AG04449 (cell line): ENCODE measurements at regions of chr1 and their contacts with region 1.

Region 1: GRCh38 chr1:153967082-153968000 is at the start of gene CREB3L4:
- DNase-seq: peak; percentile 90
- H3K4me3 ChIP-seq: peak within 1 kb of the TSS; percentile 73
- CTCF ChIP-seq: peak; percentile 59

Region 2: GRCh38 chr1:153728305-153729066 is 238.9 kb before region 1 on chr1:
- CTCF ChIA-PET with region 1: no interaction called
- POLR2A ChIA-PET with region 1: no interaction called
- DNase-seq: no peak
- H3K4me3 ChIP-seq: peak overlapping the region; percentile 90
- CTCF ChIP-seq: no peak

Region 3: DNA sequence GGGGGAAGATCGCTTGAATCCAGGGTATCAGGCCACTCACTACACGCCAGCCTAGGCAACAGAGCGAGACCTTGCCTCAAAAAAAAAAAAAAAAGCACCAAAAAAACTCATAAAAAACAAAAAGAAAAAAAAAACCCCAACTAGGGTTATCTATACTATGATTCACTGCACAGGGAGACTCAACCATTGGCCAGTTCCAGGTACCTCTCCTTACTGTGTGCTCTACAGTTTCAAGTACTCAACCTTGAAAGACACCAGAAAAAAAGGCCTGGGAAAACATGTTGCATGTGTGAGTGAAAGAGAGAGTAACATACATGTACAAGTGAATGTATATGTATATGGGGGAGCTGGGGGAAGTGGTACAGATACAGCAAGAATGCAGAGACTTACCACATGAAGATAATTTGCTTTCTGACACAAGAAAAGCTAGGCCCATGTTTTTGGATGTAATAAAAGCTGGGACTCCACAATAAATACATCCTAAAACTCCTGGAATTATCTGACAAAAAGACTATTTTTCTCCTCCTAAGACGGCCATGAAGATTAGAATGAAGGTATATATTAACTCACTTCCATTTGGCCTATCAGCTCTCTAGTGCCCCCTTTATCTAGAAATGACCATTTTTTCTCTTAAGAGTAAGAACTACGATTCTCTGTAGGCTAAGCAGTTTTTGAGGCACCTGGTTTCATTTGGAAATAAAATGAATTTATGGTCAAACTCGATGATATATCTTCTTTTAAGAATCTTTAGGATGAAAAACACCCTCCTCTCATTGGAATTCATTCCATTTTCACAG is 140.0 kb before region 1 on chr1:
- CTCF ChIA-PET with region 1: interaction called, 12 read pairs
- POLR2A ChIA-PET with region 1: no interaction called
- DNase-seq: no peak
- H3K4me3 ChIP-seq: no peak overlapping the region
- CTCF ChIP-seq: no peak

Region 4: DNA sequence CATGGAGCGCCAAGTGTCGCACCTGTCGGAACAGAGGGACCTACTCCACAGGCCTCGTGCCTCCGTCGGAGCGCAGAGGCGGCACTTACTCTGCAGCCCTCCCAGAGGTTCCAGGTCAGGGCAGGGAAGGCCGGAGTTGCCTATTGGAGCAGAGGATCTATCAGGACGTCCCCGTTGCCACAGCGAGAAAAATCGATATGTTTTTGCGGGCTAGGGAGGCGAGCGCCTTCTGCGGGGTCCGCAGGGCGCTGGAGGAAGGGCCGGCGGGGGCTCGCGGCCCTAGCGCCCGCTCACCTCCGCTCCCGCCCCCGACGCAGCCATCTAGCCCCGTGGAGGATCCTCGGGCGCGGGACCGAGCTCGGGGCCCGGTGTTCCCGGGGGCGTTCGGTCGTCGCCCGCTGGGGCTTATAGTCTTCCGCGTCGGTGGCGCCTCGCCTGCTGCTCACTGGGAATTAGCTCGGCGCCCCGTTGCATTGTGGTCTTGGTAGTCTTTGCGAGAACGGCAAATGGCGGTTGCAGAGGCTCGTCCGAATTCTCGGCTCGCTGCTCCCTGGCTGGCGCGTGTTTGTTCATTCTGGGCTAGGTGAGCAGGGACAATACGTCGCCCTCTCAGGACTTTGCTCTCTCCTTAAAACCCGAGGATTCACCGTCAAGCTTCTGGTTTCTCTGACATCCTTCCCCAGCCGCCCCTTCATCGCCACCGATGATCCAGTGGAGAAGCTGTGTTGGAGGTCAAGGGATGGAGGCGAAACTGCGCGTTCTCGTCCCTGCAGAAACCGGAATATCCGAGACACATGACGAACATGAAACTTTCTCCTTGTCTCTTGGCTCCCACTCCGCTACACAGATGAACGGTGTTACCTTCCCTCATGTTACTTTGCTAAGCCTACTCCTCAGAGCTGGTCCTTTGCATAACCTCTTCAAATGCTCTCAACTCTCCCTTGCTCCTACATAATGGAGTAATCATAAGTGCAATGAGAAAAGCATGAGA is 10.2 kb after region 1 on chr1 and contains the start of gene JTB:
- CTCF ChIA-PET with region 1: interaction called, 41 read pairs
- POLR2A ChIA-PET with region 1: interaction called, 44 read pairs
- DNase-seq: no peak
- H3K4me3 ChIP-seq: peak within 1 kb of the TSS; percentile 98
- CTCF ChIP-seq: no peak